Calu3 (cell line): ENCODE measurements at regions of chr15 and their contacts with region 1.

Region 1: GRCh38 chr15:71278989-71279756 is 163.9 kb downstream of the THSD4 start:
- DNase-seq: peak; percentile 87
- H3K4me3 Mint-ChIP-seq: peak overlapping the region; percentile 9
- H3K27ac Mint-ChIP-seq: peak overlapping the region; percentile 69
- H3K4me1 Mint-ChIP-seq: peaks cover 64% of the 10 kb centered on the region
- H3K27me3 Mint-ChIP-seq: no peaks in the 10 kb centered on the region
- CTCF ChIP-seq: no peak

Region 2: DNA sequence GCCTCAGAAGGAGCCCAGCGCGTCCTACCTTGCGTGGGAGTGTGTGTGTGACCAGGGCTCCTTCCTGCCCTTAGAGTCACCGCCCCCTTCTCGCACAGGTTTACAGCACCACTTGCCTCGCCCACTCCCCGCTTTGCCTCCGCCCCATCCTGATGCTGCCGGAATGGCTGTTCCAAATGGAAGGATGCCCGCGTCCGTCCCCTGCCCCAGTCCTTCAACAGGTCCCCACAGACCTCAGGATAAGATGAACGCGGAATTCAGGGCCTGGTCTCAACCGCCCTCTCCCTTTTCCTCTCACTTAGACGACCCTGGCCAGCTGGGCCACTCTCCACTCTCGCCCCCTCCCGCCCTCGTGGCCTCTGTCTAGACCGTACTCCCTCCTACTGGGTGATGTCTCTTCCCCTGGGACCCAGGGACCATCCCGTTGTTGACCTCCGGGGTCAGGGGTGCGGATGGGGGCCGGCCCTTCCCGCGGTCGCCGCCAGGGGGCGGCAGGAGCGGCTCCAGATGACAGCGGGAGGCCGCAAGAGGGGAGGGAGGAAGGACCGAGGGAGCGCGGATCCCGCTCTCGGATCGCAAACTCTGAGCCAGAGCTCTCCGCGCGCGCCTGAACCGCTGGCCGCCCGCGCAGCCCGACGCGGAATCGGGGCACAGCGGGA is 164.1 kb before region 1 on chr15 and contains the start of gene THSD4:
- CTCF ChIA-PET with region 1: no interaction called
- intact Hi-C with region 1: loop called (anchors 5 kb)
- DNase-seq: peak; percentile 88
- H3K4me3 Mint-ChIP-seq: peak within 1 kb of the TSS; percentile 83
- H3K27ac Mint-ChIP-seq: peak within 1 kb of the TSS; percentile 83
- H3K4me1 Mint-ChIP-seq: peaks cover 44% of the 10 kb centered on the region
- H3K27me3 Mint-ChIP-seq: no peaks in the 10 kb centered on the region
- CTCF ChIP-seq: peak; percentile 99
- total RNA-seq, gene THSD4: 24.2 and 29.6 TPM in 2 replicates

Region 3: DNA sequence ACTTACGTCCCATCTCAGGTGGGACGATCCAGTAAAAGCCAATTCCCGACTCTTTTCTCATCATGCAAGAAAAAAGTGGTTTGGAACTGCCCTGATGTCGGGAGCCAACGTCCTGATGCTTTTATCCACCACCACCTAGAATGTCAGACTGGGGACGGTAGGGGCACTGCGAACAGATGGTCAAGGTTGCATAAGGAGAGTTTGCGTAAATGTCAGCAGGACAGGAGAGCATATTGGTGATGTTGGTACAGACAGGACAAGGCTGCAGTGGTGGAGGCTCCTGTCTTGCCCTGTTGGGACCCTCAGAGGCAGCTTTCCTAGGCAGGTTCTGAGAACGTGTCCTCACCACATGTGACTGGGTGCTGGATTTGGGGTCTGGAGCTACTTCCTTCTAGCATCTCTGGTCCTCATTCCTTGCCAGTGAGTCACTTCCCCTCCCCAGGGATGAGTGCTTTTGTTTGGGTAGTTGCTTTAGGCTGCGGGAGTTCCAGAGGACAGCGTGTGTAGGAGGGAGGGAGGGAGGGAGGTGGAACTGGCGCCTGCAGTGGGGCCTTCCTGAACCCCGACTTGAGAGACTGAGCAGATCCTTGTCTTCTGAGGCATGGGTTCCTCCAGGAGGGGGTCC is 142.9 kb before region 1 on chr15:
- CTCF ChIA-PET with region 1: no interaction called
- intact Hi-C with region 1: loop called (anchors 2 kb)
- DNase-seq: peak; percentile 62
- H3K4me3 Mint-ChIP-seq: no peak overlapping the region
- H3K27ac Mint-ChIP-seq: peak overlapping the region; percentile 64
- H3K4me1 Mint-ChIP-seq: peaks cover 85% of the 10 kb centered on the region
- H3K27me3 Mint-ChIP-seq: no peaks in the 10 kb centered on the region
- CTCF ChIP-seq: no peak

Region 4: GRCh38 chr15:71251584-71252043 is 27.6 kb before region 1 on chr15:
- CTCF ChIA-PET with region 1: interaction called, 3 read pairs
- intact Hi-C with region 1: loop called (anchors 2 kb)
- DNase-seq: no peak
- H3K4me3 Mint-ChIP-seq: no peak overlapping the region
- H3K27ac Mint-ChIP-seq: peak overlapping the region; percentile 78
- H3K4me1 Mint-ChIP-seq: peaks cover 36% of the 10 kb centered on the region
- H3K27me3 Mint-ChIP-seq: no peaks in the 10 kb centered on the region
- CTCF ChIP-seq: no peak

Region 5: DNA sequence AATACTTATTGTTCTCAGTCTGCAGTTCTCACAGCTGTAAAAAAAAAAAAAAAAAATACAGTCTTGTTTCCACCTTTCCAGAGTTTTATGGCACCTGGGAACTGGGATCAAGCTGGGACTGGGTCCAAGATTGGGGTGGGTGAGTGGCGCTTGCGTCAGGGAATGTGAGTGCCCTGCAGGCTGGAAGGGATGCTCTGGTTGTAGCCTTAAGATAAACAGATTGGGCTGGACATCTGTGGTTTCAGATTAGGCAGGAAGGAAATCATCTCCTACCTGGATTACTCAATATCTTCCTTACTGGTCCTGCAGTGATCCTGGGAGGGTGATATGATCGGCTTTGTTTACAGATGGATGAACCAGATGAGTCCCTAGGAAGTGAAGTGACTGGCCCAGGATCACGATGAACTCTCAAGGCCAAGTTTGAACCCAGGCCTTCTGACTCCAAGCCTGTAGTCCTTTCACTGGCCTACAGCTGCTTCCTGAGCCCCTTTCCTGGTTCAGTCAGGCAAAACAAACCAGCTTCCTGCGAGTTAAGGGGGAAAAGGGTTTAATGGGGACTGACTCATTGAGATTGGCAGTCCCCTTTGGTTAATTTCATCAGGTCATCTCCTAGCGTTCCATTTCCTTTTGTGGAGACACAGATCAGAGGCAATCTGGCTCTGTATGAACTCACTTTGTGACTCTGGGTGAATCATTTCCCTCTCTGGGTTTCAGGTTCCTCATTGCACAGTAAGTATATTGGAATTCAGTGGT is 15.9 kb after region 1 on chr15:
- CTCF ChIA-PET with region 1: interaction called, 8 read pairs
- intact Hi-C with region 1: loop called (anchors 1 kb)
- DNase-seq: peak; percentile 79
- H3K4me3 Mint-ChIP-seq: no peak overlapping the region
- H3K27ac Mint-ChIP-seq: peak overlapping the region; percentile 77
- H3K4me1 Mint-ChIP-seq: peaks cover 83% of the 10 kb centered on the region
- H3K27me3 Mint-ChIP-seq: no peaks in the 10 kb centered on the region
- CTCF ChIP-seq: no peak

Region 6: GRCh38 chr15:71547011-71547410 is 267.8 kb after region 1 on chr15:
- CTCF ChIA-PET with region 1: no interaction called
- intact Hi-C with region 1: no loop called
- DNase-seq: no peak
- H3K4me3 Mint-ChIP-seq: no peak overlapping the region
- H3K27ac Mint-ChIP-seq: no peak overlapping the region
- H3K4me1 Mint-ChIP-seq: no peaks in the 10 kb centered on the region
- H3K27me3 Mint-ChIP-seq: no peaks in the 10 kb centered on the region
- CTCF ChIP-seq: no peak